Activated naive CD4-positive, alpha-beta T cell treated with anti-CD3 and anti-CD28 coated beads for 36 hours (primary cell): ENCODE measurements at regions of chr17 and their contacts with region 1.

Region 1: DNA sequence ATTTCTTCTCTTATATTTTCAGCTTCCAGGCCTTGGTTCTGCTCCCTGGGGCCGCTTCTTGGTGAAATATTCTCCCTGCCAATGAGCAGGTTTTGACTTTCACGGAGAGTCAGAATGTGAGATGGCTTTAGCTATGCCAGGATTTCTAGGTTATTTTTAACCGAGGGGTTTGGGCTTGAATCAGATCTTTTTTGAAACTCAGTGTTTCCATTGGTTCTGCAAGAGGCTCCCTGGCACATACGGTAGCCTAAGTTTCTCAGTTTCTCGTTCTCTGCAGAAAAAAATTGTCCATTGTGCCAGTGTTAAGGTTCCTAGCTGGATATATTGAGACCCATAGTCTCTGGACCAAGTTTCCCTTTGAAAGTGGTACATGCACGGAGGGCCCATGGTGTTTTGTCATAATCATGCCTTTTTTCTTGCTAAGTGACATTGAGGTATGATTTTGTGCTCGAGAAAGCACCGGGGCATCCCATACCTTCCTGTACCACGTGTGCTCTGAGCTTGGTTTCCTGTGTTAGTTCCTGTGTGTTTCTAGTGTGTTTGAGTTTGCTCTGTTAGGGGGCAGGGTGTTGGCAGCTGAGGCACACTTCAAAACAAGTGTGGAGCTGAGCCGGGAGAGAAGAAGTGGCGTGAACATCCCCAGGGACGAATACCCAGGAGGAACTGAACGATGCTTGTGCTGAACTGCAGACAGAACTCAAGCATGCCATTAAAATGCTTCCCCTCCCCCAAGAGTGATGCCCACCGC is 127.2 kb downstream of the HS3ST3B1 start:
- DNase-seq: peak; percentile 78
- H3K4me3 Mint-ChIP-seq: peak overlapping the region; percentile 56
- H3K27ac Mint-ChIP-seq: peak overlapping the region; percentile 78
- H3K4me1 Mint-ChIP-seq: peaks cover 60% of the 10 kb centered on the region
- H3K27me3 Mint-ChIP-seq: no peaks in the 10 kb centered on the region

Region 2: GRCh38 chr17:13017659-13018459 is 1410.2 kb before region 1 on chr17 and contains the start of gene ELAC2:
- CTCF ChIA-PET with region 1: no interaction called
- intact Hi-C with region 1: loop called (anchors 5 kb)
- DNase-seq: peak; percentile 97
- H3K4me3 Mint-ChIP-seq: peak within 1 kb of the TSS; percentile 93
- H3K27ac Mint-ChIP-seq: peak within 1 kb of the TSS; percentile 97
- H3K4me1 Mint-ChIP-seq: peaks cover 27% of the 10 kb centered on the region
- H3K27me3 Mint-ChIP-seq: no peaks in the 10 kb centered on the region
- total RNA-seq, gene ELAC2: 74.1 to 75.9 TPM

Region 3: DNA sequence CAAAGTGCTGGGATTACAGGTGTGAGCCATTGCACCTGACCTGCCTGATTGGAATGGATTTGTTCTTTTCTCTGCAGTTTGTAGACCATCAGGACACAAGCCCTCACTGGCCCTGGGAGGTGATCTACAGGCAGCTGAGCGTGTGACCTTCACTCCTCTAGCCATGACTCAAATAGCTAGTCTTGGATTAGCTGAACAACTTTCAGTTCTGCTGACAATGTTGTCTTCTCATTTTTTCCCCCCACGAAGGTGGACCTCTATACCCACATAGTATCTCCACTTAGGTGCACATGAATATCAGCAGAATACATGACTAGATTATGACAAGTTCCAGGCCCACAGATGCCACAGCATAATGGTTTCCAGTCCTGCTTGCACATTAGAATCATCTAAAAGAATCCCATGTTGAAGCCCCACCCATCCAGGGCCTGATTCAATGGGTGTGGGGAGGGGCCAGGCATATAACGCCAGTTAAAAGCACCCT is 90.4 kb before region 1 on chr17:
- CTCF ChIA-PET with region 1: interaction called, 3 read pairs
- intact Hi-C with region 1: loop called (anchors 1 kb)
- DNase-seq: peak; percentile 77
- H3K4me3 Mint-ChIP-seq: no peak overlapping the region
- H3K27ac Mint-ChIP-seq: peak overlapping the region; percentile 46
- H3K4me1 Mint-ChIP-seq: peaks cover 79% of the 10 kb centered on the region
- H3K27me3 Mint-ChIP-seq: no peaks in the 10 kb centered on the region

Region 4: GRCh38 chr17:14389681-14390080 is 38.4 kb before region 1 on chr17:
- CTCF ChIA-PET with region 1: no interaction called
- intact Hi-C with region 1: loop called (anchors 5 kb)
- DNase-seq: no peak
- H3K4me3 Mint-ChIP-seq: no peak overlapping the region
- H3K27ac Mint-ChIP-seq: no peak overlapping the region
- H3K4me1 Mint-ChIP-seq: no peaks in the 10 kb centered on the region
- H3K27me3 Mint-ChIP-seq: no peaks in the 10 kb centered on the region

Region 5: GRCh38 chr17:14442790-14443528 is 14.9 kb after region 1 on chr17:
- CTCF ChIA-PET with region 1: no interaction called
- intact Hi-C with region 1: loop called (anchors 1 kb)
- DNase-seq: no peak
- H3K4me3 Mint-ChIP-seq: no peak overlapping the region
- H3K27ac Mint-ChIP-seq: no peak overlapping the region
- H3K4me1 Mint-ChIP-seq: no peaks in the 10 kb centered on the region
- H3K27me3 Mint-ChIP-seq: no peaks in the 10 kb centered on the region